Activated CD4-positive, alpha-beta T cell treated with anti-CD3 and anti-CD28 coated beads for 36 hours (primary cell): ENCODE measurements at regions of chr2 and their contacts with region 1.

Region 1: GRCh38 chr2:25314514-25315315 is 27.0 kb downstream of the DNMT3A start:
- DNase-seq: peak; percentile 97
- ATAC-seq: peak; percentile 88
- H3K4me3 Mint-ChIP-seq: peak overlapping the region; percentile 83
- H3K27ac Mint-ChIP-seq: peak overlapping the region; percentile 95
- H3K4me1 Mint-ChIP-seq: peaks cover 58% of the 10 kb centered on the region
- H3K27me3 Mint-ChIP-seq: no peaks in the 10 kb centered on the region

Region 2: DNA sequence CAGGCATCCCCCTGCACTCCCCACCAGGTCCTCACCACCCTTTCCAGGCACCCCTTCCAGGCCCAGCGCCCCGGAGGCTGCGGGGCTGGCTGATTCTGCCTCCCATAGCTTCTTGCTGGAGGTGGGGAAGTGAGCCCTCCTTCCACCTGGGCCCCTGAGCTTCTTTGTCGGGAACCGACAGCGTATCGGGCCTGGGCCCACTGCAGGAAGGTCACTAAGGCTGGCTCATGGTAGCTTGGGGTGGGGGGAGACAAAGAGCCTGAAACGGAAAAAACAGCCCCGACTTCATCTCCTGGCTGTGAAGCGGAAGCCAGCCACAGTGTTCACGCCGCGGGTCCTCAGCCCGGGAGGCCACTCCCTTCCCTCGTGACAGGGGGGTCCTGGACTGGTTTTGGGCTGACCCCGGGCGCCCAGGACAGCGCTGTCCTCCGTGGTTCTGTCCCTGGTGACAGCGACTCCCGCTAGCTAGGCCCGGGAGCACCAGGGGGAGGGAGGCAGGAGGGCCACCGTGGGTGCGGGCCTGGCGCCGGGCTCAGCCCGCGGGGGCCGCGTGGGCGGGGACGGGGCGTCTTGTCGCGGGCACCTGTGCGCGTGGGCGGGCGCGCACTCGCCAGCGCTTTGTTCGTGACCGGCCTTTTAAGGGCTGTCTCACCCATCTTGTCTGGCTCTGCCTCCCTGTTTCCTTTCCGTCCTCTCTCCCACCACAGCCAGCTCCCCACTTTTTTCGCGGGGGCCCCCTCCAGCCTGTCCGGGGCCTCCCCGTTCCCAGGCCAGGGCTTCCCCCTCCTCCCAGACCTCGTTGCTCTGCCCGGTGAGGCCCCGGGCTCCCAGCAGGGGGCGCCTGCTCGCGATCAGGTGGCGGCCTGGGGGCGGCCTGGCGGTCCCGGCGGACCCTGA is 37.9 kb before region 1 on chr2:
- CTCF ChIA-PET with region 1: interaction called, 9 read pairs
- POLR2A ChIA-PET with region 1: interaction called, 4 read pairs
- intact Hi-C with region 1: loop called (anchors 1 to 2 kb)
- DNase-seq: peak; percentile 90
- ATAC-seq: peak; percentile 65
- H3K4me3 Mint-ChIP-seq: peak overlapping the region; percentile 9
- H3K27ac Mint-ChIP-seq: peak overlapping the region; percentile 90
- H3K4me1 Mint-ChIP-seq: peaks cover 70% of the 10 kb centered on the region
- H3K27me3 Mint-ChIP-seq: no peaks in the 10 kb centered on the region

Region 3: DNA sequence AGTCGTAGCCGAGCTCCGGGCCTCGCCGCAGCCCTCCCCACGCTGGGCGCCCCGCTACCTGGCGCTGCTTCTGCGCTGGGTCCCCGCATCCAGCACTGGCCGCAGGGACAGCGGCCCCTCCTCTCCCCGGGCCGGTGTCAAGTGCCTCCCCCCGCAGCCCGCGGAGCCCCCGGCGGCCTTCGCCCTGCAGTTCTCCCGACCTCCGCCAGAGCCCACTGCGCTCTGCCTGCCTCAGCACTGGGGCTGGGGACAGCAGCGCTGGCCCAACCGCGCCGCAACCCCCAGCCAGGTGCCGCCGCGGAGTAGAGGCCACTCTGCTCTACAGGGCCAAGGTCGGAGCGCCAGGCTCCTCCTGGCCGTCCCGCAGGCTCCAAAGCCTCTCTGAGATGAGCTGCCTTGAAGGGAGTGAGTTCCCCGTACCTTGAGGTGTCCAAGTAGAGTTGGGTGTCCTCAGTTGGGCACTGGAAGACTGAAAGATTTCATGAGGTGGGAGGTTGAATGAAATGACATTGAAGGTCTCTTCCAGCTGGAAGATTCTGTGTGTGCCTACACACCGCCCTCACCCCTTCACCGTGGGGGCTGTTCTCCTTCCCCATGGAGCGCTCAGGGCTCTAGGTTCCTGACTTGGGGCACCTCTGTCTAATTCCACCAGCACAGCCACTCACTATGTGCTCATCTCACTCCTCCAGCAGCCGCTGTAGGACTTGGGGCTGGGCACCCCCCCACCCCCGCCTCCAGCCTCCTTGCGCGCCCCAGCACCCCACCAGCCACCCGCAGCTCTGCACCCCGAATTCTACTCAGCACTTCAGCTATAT is 27.9 kb after region 1 on chr2:
- CTCF ChIA-PET with region 1: interaction called, 8 read pairs
- POLR2A ChIA-PET with region 1: interaction called, 4 read pairs
- intact Hi-C with region 1: loop called (anchors 1 to 2 kb)
- DNase-seq: peak; percentile 90
- ATAC-seq: peak; percentile 80
- H3K4me3 Mint-ChIP-seq: peak overlapping the region; percentile 75
- H3K27ac Mint-ChIP-seq: no peak overlapping the region
- H3K4me1 Mint-ChIP-seq: peaks cover 39% of the 10 kb centered on the region
- H3K27me3 Mint-ChIP-seq: no peaks in the 10 kb centered on the region

Region 4: DNA sequence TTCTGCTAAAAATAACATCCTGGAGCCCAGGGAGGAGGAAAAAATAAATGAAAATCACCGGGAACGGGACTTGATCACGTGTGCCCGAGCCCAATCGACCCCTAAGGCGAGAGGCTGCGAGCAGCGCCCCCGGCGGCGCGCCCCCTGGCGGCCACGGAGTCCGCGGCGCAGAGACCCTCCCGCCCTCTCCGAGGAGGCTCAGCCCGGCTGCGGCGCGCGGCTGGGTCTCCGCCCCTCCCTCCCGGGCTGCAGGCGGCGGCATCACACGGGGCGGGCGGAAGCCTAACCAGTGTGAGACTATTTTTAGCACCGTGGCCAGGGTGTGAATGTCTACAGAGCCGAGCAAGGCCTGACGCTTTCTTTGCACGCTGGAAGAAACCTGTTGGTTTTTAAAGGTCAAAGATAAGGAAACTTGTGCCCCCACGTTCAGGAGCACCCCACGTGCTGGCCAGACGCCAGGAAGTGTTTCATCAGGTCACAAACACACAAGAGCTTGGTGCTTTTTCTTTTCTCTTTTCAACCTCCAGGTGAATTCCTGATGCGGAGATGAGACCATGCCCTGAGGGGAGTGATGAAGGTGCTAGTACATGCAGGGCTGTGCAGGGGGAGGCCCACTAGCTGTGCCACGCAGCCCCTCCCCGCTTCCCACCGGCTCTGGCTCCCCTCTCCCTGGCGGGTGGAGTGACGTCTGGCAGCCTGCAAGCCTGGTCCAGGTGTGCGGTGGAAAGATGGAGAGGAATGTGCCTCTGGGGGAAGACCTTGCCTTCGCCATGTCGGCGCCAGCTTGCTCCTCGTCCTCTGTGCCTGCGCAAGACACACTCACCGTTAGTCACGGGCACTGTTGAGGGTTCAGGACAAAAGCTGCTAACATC is 62.3 kb after region 1 on chr2:
- CTCF ChIA-PET with region 1: interaction called, 6 read pairs
- POLR2A ChIA-PET with region 1: interaction called, 6 read pairs
- intact Hi-C with region 1: loop called (anchors 1 kb)
- DNase-seq: peak; percentile 96
- ATAC-seq: peak; percentile 98
- H3K4me3 Mint-ChIP-seq: peak overlapping the region; percentile 69
- H3K27ac Mint-ChIP-seq: peak overlapping the region; percentile 92
- H3K4me1 Mint-ChIP-seq: peaks cover 42% of the 10 kb centered on the region
- H3K27me3 Mint-ChIP-seq: no peaks in the 10 kb centered on the region

Region 5: GRCh38 chr2:25521665-25522387 is 207.1 kb after region 1 on chr2:
- CTCF ChIA-PET with region 1: no interaction called
- POLR2A ChIA-PET with region 1: no interaction called
- intact Hi-C with region 1: loop called (anchors 1 to 2 kb)
- DNase-seq: peak; percentile 34
- ATAC-seq: peak; percentile 98
- H3K4me3 Mint-ChIP-seq: peak overlapping the region; percentile 24
- H3K27ac Mint-ChIP-seq: peak overlapping the region; percentile 77
- H3K4me1 Mint-ChIP-seq: peaks cover 7% of the 10 kb centered on the region
- H3K27me3 Mint-ChIP-seq: no peaks in the 10 kb centered on the region

Region 6: GRCh38 chr2:25586726-25587144 is 272.0 kb after region 1 on chr2:
- CTCF ChIA-PET with region 1: no interaction called
- POLR2A ChIA-PET with region 1: interaction called, 5 read pairs
- intact Hi-C with region 1: loop called in 1 of 2 experiments (anchors 1 kb)
- DNase-seq: peak; percentile 65
- ATAC-seq: peak; percentile 88
- H3K4me3 Mint-ChIP-seq: no peak overlapping the region
- H3K27ac Mint-ChIP-seq: peak overlapping the region; percentile 68
- H3K4me1 Mint-ChIP-seq: peaks cover 18% of the 10 kb centered on the region
- H3K27me3 Mint-ChIP-seq: no peaks in the 10 kb centered on the region